Right lobe of liver (tissue), 6 donors: ENCODE measurements at regions of chr6 and their contacts with region 1.

Region 1: DNA sequence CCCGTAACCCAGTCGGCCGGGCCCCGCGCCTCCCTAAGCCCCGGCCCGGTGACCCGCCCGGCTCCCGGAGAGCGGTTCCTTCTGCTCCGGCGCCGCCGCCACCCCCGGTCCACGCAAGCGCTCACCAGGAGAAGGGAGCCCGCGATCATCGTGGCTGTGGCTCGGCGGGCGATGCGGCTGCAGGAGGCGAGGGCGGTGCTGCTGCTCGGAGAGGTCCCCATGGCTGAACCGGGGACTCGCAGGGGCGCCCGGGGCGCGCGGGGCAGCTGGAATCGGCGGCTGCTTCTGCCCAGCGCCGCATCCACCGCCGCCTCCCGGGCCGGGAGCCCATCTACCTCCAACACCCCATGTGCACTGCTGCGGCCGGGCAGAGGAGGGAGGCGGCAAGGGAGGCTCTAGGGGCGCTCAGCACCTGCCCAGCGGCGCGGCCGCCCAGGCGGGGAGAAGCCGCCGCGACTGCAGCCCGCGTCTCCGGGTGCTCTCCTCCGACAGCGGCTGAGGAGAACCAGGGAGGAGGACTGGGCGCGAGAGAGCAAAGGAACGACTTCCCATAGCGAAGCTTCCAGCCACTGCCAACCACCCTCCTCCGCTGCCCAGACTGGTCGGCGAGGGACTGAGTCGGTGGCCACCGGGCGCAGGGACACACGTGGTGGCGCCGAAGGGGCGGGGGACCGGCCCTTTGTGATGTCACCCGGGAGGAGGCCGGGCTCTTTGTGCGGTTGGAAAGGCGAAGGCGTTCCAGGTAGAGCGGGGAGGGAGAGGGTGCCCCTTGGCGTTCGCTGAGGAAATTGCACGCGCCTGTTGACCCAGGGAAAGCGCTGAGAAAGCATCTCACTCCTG is at the start of gene TNFRSF21:
- DNase-seq: peak; percentile 91 to 94 (median 93)
- ATAC-seq: peak; percentile 99 to 100 (median 100)
- H3K4me3 ChIP-seq: peak within 1 kb of the TSS; percentile 57 to 68 (median 63)
- H3K27ac ChIP-seq: peak within 1 kb of the TSS in 2 of 3 donors; percentile 45 to 48
- H3K4me1 ChIP-seq: no peaks in the 10 kb centered on the region
- H3K27me3 ChIP-seq: peaks cover 0 to 6% of the 10 kb centered on the region in 2 donors
- CTCF ChIP-seq: peak; percentile 93 to 97 (median 96)
- POLR2A ChIP-seq: peak; percentile 89
- total RNA-seq, gene TNFRSF21: 1.9 to 7.9 (median 5.3) TPM

Region 2: DNA sequence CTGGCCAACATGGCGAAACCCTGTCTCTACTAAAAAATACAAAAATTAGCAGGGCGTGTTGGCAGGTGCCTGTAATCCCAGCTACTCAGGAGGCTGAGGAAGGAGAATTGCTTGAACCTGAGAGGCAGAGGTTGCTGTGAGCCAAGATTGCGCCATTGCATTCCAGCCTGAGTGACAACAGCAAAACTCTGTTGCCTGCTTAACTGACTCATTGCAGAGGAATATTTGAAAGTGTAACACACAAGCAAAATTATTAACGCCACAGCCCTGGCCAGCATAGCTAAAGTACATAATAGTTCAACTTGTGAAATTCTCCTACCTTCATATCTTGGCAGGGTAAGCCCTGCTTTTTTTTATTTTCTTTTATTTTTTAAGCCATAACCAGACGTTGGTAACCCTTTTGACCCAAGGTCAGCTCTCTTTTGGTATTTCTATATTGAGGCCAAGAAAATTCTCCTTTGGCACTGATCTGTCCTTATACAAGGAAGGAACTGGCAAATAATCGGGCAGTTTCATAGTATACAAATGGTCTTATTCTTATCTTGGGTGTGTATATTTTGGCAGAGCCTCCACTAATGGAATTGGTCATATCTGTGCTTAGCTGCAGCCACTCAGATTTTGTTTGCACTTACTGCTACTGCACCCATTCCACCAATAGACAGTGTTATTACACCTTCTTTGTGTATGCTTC is 383.8 kb before region 1 on chr6:
- intact Hi-C with region 1: no loop called
- DNase-seq: peak in 1 of 3 donors; percentile 34
- ATAC-seq: peak in 3 of 4 donors; percentile 17 to 79 (median 29)
- H3K4me3 ChIP-seq: no peak overlapping the region
- H3K27ac ChIP-seq: no peak overlapping the region
- H3K4me1 ChIP-seq: no peaks in the 10 kb centered on the region
- H3K27me3 ChIP-seq: no peaks in the 10 kb centered on the region
- CTCF ChIP-seq: no peak
- POLR2A ChIP-seq: no peak

Region 3: GRCh38 chr6:47097092-47097945 is 212.2 kb before region 1 on chr6:
- intact Hi-C with region 1: loop called (anchors 5 kb)
- DNase-seq: peak in 2 of 3 donors; percentile 41 to 66
- ATAC-seq: peak; percentile 92 to 98 (median 96)
- H3K4me3 ChIP-seq: no peak overlapping the region
- H3K27ac ChIP-seq: no peak overlapping the region
- H3K4me1 ChIP-seq: no peaks in the 10 kb centered on the region
- H3K27me3 ChIP-seq: no peaks in the 10 kb centered on the region
- CTCF ChIP-seq: peak; percentile 61 to 73 (median 70)
- POLR2A ChIP-seq: no peak

Region 4: DNA sequence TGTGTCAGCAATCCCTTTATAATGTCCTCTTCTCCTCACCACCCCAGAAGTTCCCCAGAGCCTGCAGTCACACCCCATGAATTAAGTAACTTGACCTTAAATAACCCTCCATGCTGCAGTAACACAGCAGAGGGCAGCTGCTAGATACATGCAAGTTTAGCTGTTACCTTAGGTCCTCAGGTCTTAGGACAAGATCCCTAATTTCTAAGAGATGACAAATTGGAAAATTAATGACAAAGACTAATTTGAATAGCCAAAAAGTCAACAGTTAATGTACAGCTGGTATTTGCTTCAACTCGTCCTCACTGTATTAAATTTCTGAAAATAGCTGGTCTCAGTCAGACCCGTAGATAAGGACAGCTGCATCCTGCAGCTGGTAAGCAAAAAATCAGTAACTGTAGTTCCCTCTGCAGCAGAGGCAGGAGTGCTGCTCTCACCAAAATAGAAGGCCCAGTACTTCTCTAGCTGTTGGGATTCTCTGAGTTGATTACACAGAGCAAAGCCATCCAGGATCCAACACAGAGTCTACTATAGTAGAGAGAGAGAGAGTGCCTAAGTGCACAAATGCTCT is 62.2 kb before region 1 on chr6:
- intact Hi-C with region 1: no loop called
- DNase-seq: no peak
- ATAC-seq: peak; percentile 47 to 77 (median 64)
- H3K4me3 ChIP-seq: no peak overlapping the region
- H3K27ac ChIP-seq: no peak overlapping the region
- H3K4me1 ChIP-seq: no peaks in the 10 kb centered on the region
- H3K27me3 ChIP-seq: no peaks in the 10 kb centered on the region
- CTCF ChIP-seq: no peak
- POLR2A ChIP-seq: no peak